Kidney (tissue), 22 donors: ENCODE measurements at regions of chr14 and their contacts with region 1.

Region 1: GRCh38 chr14:94136575-94137331 is 7.3 kb upstream of the IFI27L2 start:
- DNase-seq: peak; percentile 82 to 92 (median 85)
- H3K4me3 ChIP-seq: no peak overlapping the region
- H3K27ac ChIP-seq: no peak overlapping the region
- H3K4me1 ChIP-seq: no peaks in the 10 kb centered on the region
- H3K27me3 ChIP-seq: no peaks in the 10 kb centered on the region
- CTCF ChIP-seq: peak; percentile 98

Region 2: DNA sequence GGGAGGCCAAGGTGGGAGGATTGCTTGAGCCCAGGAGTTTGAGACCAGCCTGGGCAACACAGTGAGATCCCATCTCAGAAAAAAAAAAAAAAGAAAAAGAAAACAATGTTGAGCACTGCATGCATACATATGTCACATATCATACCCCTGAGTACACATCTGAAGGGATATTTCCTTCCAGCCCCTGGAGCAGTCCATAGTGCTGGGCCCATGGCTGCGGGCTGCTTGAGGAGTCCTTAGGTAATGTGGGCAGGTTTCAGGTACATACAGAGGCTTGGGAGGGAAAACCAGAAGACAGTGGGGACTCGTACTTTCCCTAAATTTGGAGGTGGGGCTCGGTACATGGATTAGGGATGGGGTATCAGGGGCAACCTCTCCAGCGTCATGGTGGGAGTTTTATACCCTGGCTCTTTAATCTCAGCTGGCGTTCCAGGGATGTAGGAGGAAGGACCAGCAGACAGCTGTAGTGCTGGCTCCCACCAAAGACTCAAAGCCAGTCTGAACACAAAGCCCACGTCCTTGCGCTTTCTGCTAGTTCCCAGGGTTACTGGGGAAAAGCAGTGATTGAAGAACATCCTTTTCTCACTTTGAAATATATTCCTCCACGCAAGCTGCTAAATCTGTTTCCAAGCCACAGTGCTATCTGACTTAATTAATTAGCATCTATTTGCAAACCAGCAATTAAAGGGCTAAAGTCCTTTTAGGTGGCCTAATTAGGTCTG is 105.4 kb before region 1 on chr14:
- intact Hi-C with region 1: loop called (anchors 5 kb)
- DNase-seq: no peak
- H3K4me3 ChIP-seq: no peak overlapping the region
- H3K27ac ChIP-seq: no peak overlapping the region
- H3K4me1 ChIP-seq: no peaks in the 10 kb centered on the region
- H3K27me3 ChIP-seq: no peaks in the 10 kb centered on the region
- CTCF ChIP-seq: no peak